Posterior cingulate gyrus (tissue), 11 donors: ENCODE measurements at regions of chr9 and their contacts with region 1.

Region 1: DNA sequence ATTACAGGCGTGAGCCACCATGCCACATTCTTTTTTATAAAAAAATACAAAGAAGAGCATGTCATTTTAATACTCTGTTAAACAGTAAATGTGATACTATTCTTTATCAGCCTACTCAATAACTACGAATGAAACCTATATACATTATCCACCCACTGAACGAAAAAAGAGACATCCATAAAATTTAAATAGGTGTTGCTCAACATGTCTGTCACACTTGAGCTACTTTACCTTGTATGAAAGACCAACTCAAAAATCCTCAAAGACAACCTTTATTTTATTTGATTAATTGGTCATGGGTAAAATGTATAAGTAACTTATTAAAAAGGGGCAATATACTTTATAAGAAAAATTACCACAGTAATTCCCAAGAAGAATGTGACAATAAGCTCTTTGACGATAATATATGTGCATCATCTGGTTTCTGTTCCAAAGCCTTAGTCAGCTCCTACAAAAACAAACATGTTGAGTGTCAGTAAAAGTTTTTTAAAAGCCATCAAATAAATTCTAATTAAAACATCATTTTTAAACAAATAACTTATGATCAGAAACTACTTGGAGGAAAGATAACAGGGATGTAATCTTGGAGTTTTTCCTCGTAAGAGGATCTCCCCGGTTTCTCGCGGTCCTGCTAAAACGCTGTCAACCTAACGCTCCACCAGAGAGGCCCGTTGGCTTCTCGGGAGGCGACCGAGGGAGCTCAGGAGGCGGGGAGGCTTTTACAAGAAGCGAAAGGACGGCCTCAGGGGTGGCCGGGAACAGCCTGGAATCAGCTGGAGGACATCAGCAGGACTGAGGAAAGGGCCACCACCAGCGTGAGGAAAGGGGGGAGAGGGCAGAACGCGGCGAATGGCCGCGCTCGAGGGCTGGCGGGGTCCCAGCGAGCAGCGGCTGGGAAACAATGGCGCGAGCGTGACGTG is 13.5 kb upstream of the ANKRD18B start:
- DNase-seq: peak; percentile 51 to 94 (median 65)

Region 2: DNA sequence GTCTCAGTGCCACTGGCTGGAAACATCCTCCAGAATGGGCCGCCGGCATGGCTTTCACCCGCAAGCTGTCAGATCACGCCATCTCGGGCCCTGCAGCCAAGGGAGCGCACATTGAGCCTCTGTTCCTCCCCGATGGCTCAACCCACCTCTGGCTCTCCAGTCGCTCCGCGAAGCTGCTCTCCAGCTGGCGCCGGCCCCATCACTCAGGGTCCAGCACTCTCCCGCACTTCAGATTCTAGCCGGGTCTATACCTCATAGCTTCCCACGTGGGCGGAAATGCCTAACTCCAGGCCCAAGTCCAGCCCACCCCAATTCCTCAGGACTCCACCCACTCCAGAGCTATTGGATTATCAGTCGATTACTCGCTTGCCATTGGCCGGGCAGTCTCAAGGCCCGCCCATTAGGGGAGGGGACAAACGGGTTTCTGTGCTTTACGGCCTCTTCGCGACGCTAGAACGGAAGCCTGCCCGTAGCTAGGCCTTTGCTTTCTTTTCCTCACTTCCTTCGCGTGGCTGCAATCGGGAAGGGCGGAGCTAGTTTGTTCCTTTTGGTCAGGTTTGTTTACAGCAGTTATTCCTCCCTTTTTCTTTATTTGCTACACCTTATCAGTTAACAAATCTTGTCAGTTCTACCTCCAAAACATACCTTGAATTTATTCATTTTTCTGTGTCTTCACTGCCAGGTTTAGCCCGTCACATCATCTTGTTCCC is 36.7 kb before region 1 on chr9 and contains the start of gene NOL6:
- intact Hi-C with region 1: loop called (anchors 2 kb)
- DNase-seq: peak; percentile 95 to 100 (median 97)

Region 3: GRCh38 chr9:33765411-33765810 is 254.9 kb after region 1 on chr9:
- intact Hi-C with region 1: no loop called
- DNase-seq: no peak